ENCODE measurements at regions of chr1 and their contacts with region 1.

Region 1: DNA sequence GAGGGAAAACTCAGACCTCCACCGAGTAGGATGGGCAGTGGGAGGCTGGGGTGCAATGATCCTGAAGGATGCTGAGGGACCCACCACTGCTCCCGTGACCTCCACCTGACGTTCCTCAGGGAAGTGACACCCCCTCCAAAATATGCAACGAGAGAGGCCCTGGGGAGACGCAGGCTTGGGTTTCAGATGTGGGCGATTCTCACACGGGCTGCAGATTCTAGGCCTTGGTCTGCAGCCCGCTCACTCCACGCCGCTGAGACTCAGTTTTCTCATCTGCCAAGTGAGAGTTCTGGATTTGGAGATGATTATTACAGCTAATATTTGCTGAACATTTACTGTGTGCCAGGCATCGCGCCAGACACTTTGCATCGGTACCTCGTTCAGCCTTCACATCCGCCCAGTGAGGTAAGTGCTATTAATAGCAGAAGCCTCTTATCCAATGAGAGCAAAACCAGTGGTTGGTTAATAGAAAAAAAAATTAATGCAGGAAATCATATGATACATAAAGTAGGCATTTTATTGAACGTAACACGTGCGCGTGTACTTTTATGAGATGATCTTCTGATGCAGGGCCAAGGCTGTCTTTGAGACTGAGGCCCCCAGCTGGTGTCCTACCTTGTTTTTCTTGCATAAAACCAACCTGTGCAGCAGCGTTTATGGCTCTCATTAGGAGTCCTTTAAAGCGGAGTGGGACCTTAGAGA is 102.0 kb upstream of the RUNX3 start:
- DNase-seq: peak; percentile 83
- ATAC-seq: peak; percentile 39
- H3K4me3 Mint-ChIP-seq: no peak overlapping the region
- H3K27ac Mint-ChIP-seq: no peak overlapping the region
- H3K4me1 Mint-ChIP-seq: peaks cover 84% of the 10 kb centered on the region
- H3K27me3 Mint-ChIP-seq: no peaks in the 10 kb centered on the region
- CTCF ChIP-seq: no peak

Region 2: GRCh38 chr1:24987875-24988557 is 44.1 kb before region 1 on chr1:
- CTCF ChIA-PET with region 1: interaction called, 28 read pairs
- POLR2A ChIA-PET with region 1: interaction called, 120 read pairs
- intact Hi-C with region 1: loop called (anchors 5 kb)
- DNase-seq: peak; percentile 83
- ATAC-seq: peak; percentile 76
- H3K4me3 Mint-ChIP-seq: no peak overlapping the region
- H3K27ac Mint-ChIP-seq: peak overlapping the region; percentile 82
- H3K4me1 Mint-ChIP-seq: peaks cover 95% of the 10 kb centered on the region
- H3K27me3 Mint-ChIP-seq: no peaks in the 10 kb centered on the region
- CTCF ChIP-seq: no peak

Measured in activated CD8-positive, alpha-beta T cell treated with anti-CD3 and anti-CD28 coated beads for 36 hours (primary cell).